Naive thymus-derived CD4-positive, alpha-beta T cell (primary cell): ENCODE measurements at regions of chr12 and their contacts with region 1.

Region 1: DNA sequence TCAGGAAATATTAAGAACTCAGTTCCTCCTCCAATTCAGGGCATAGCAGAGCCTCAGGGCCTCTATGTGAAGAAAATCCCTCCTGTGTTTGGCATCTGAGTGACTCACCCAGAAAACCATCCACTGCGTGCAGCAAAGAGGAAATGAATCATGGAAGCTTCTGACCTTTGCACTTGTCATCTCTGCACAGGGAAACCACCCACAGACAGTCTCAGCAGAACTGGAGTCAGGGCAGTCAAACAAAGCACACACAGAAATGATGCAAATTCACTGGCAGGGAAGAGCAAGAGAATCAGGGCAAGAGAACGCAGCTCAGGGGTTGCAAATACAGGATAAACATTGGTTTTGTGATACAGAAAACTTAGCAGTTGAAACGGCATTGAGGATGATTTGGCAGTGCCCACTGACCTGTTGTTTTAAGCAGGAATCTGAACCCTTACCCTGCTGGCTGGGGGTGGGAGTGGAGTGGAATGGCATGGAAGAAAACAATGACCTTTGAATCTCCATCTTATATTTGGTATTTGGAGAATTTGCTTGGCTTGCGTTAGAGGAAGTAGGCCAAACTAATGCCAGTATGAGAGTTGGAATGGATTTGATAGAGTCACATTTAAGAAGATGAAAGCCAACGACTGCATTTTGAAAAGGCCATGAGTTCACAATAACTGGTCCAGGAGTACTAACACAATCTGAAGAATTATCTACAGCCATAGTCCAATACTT is 53.5 kb downstream of the PHLDA1 start:
- DNase-seq: peak in 8 of 9 donors; percentile 4 to 80 (median 38)
- ATAC-seq: peak; percentile 94
- H3K4me3 ChIP-seq: no peak overlapping the region
- H3K4me3 Mint-ChIP-seq: peak overlapping the region in 7 of 10 donors; percentile 24 to 64 (median 51)
- H3K27ac ChIP-seq: peak overlapping the region; percentile 21
- H3K27ac Mint-ChIP-seq: peak overlapping the region; percentile 41 to 90 (median 74)
- H3K4me1 ChIP-seq: peaks cover 15 to 26% of the 10 kb centered on the region in 2 donors
- H3K4me1 Mint-ChIP-seq: peaks cover 21 to 58% (median 26%) of the 10 kb centered on the region in 7 donors
- H3K27me3 ChIP-seq: no peaks in the 10 kb centered on the region
- H3K27me3 Mint-ChIP-seq: no peaks in the 10 kb centered on the region

Region 2: DNA sequence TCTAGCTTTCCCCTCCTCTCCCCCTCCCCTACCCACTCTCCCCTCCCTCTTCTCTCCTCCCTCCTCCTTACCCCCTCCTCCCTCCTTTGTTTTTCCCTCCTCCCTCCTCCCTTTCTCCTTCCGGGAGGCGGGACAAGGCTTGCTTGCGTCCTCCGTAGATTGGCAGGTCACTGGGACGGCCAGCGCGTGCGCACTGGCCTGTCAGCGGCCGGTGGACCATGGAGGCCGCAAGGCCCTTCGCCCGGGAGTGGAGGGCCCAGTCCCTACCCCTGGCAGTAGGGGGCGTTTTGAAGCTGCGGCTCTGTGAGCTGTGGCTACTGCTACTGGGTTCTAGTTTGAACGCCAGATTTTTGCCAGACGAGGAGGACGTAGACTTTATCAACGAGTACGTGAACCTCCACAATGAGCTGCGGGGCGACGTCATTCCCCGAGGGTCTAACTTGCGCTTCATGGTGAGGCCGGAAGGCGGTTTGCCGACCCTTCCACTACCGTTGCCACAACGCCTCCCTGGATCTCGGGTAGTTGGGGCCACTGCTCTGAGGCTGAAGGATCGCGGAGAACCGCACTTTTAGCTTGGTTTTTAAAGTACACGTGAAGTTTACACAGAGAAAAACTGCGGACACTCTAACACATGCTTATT is 587.1 kb before region 1 on chr12 and contains the start of gene GLIPR1L2:
- CTCF ChIA-PET with region 1: no interaction called
- POLR2A ChIA-PET with region 1: no interaction called
- intact Hi-C with region 1: loop called in 1 of 2 experiments (anchors 2 kb)
- DNase-seq: peak; percentile 75 to 86 (median 80)
- ATAC-seq: peak; percentile 96
- H3K4me3 ChIP-seq: peak within 1 kb of the TSS; percentile 67
- H3K4me3 Mint-ChIP-seq: peak within 1 kb of the TSS; percentile 87 to 98 (median 94)
- H3K27ac ChIP-seq: peak within 1 kb of the TSS; percentile 79
- H3K27ac Mint-ChIP-seq: peak within 1 kb of the TSS; percentile 93 to 99 (median 98)
- H3K4me1 ChIP-seq: peaks cover 14 to 19% of the 10 kb centered on the region in 2 donors
- H3K4me1 Mint-ChIP-seq: peaks cover 26 to 61% (median 44%) of the 10 kb centered on the region in 7 donors
- H3K27me3 ChIP-seq: no peaks in the 10 kb centered on the region
- H3K27me3 Mint-ChIP-seq: peaks cover 0 to 3% (median 0%) of the 10 kb centered on the region in 5 donors
- total RNA-seq, gene GLIPR1L2: 0.22 to 2.3 (median 0.38) TPM

Region 3: GRCh38 chr12:75641031-75641780 is 336.9 kb before region 1 on chr12:
- CTCF ChIA-PET with region 1: no interaction called
- POLR2A ChIA-PET with region 1: no interaction called
- intact Hi-C with region 1: loop called in 1 of 2 experiments (anchors 1 kb)
- DNase-seq: peak in 1 of 9 donors; percentile 55
- ATAC-seq: peak; percentile 74
- H3K4me3 ChIP-seq: no peak overlapping the region
- H3K4me3 Mint-ChIP-seq: peak overlapping the region in 1 of 10 donors; percentile 20
- H3K27ac ChIP-seq: no peak overlapping the region
- H3K27ac Mint-ChIP-seq: peak overlapping the region in 1 of 9 donors; percentile 53
- H3K4me1 ChIP-seq: peaks cover 0 to 11% of the 10 kb centered on the region in 2 donors
- H3K4me1 Mint-ChIP-seq: peaks cover 0 to 20% (median 0%) of the 10 kb centered on the region in 7 donors
- H3K27me3 ChIP-seq: no peaks in the 10 kb centered on the region
- H3K27me3 Mint-ChIP-seq: peaks cover 1 to 10% (median 6%) of the 10 kb centered on the region in 5 donors

Region 4: GRCh38 chr12:75923964-75924666 is 54.0 kb before region 1 on chr12:
- CTCF ChIA-PET with region 1: no interaction called
- POLR2A ChIA-PET with region 1: no interaction called
- intact Hi-C with region 1: loop called in 1 of 2 experiments (anchors 10 kb)
- DNase-seq: no peak
- ATAC-seq: no peak
- H3K4me3 ChIP-seq: no peak overlapping the region
- H3K4me3 Mint-ChIP-seq: no peak overlapping the region
- H3K27ac ChIP-seq: no peak overlapping the region
- H3K27ac Mint-ChIP-seq: peak overlapping the region in 1 of 9 donors; percentile 69
- H3K4me1 ChIP-seq: no peaks in the 10 kb centered on the region
- H3K4me1 Mint-ChIP-seq: peaks cover 0 to 26% (median 0%) of the 10 kb centered on the region in 7 donors
- H3K27me3 ChIP-seq: no peaks in the 10 kb centered on the region
- H3K27me3 Mint-ChIP-seq: peaks cover 0 to 10% (median 0%) of the 10 kb centered on the region in 5 donors

Region 5: DNA sequence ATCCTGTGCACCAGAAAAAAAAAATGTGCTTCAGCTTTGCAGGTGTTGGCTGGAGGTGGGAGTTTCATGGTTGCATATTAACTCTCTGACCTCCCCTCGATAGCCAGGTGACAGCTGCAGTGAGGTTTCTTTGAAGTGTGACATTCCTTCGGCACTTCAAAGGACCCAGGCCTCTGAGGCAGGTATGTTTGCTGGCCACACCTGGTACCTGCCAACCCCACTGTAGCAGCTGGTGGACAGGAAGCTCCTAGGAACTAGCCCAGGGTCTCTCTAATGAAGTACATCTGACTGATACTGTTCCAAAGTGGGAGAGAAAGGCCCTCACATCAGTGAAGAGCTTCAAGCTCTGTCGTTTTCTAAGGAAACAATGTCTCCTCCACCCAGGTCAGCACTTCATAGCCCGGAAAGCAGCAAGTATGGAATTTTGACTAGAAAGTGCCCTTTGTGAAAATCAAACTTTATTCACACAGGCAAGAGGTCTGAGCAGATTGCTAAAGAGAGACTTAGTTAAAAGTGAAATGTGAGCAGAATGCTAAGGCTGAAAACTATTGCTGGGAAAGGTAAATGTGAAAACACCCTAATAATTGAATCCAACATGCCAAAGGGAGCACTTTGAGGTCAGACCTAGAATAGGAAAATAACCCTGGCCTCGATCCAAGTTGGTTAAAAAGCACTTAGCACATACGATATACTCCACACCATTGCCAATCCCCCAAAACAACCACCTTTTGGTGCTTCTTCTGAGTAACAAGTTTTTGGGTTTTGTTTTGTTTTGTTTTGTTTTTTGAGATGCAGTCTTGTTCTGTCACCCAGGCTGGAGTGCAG is 17.8 kb before region 1 on chr12:
- CTCF ChIA-PET with region 1: interaction called, 3 read pairs
- POLR2A ChIA-PET with region 1: no interaction called
- intact Hi-C with region 1: loop called in 1 of 2 experiments (anchors 2 kb)
- DNase-seq: no peak
- ATAC-seq: no peak
- H3K4me3 ChIP-seq: no peak overlapping the region
- H3K4me3 Mint-ChIP-seq: no peak overlapping the region
- H3K27ac ChIP-seq: no peak overlapping the region
- H3K27ac Mint-ChIP-seq: no peak overlapping the region
- H3K4me1 ChIP-seq: peaks cover 0 to 10% of the 10 kb centered on the region in 2 donors
- H3K4me1 Mint-ChIP-seq: peaks cover 0 to 31% (median 8%) of the 10 kb centered on the region in 7 donors
- H3K27me3 ChIP-seq: no peaks in the 10 kb centered on the region
- H3K27me3 Mint-ChIP-seq: no peaks in the 10 kb centered on the region

Region 6: GRCh38 chr12:76031537-76032073 is 53.5 kb after region 1 on chr12 and contains the start of gene PHLDA1:
- CTCF ChIA-PET with region 1: no interaction called
- POLR2A ChIA-PET with region 1: interaction called, 3 read pairs
- intact Hi-C with region 1: loop called (anchors 1 kb)
- DNase-seq: peak; percentile 56 to 97 (median 69)
- ATAC-seq: peak; percentile 91
- H3K4me3 ChIP-seq: peak within 1 kb of the TSS; percentile 76
- H3K4me3 Mint-ChIP-seq: peak within 1 kb of the TSS; percentile 85 to 98 (median 93)
- H3K27ac ChIP-seq: peak within 1 kb of the TSS; percentile 74
- H3K27ac Mint-ChIP-seq: peak within 1 kb of the TSS; percentile 74 to 98 (median 82)
- H3K4me1 ChIP-seq: peaks cover 5% of the 10 kb centered on the region in 2 donors
- H3K4me1 Mint-ChIP-seq: peaks cover 5 to 57% (median 23%) of the 10 kb centered on the region in 7 donors
- H3K27me3 ChIP-seq: no peaks in the 10 kb centered on the region
- H3K27me3 Mint-ChIP-seq: peaks cover 0 to 5% (median 0%) of the 10 kb centered on the region in 5 donors
- total RNA-seq, gene PHLDA1: 1.1 to 25.1 (median 4.6) TPM